ENCODE measurements at regions of chr2 and their contacts with region 1.

Region 1: DNA sequence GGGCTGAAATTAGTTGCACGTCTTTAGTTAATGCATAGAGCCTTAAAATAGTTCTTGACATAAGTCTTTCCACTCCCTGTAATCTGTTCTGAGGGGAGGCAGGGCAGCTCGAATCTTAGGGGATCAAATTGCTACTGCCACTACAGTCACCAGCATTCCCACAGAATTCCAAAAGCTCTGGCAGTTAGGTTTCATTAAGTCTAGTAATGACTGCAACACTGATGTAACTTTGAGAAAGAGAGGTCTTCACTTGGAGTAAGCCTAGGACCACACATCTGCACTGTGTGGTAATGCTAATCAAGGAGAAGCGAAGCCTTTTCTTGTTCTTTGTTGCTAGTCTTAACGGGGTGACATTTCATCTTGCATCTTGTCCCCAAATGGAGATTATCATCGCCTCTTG is 19.3 kb upstream of the NCK2 start:
- DNase-seq: no peak
- ATAC-seq: no peak
- H3K4me3 ChIP-seq: no peak overlapping the region
- H3K4me3 Mint-ChIP-seq: no peak overlapping the region
- H3K27ac ChIP-seq: no peak overlapping the region
- H3K27ac Mint-ChIP-seq: no peak overlapping the region
- H3K4me1 ChIP-seq: no peaks in the 10 kb centered on the region
- H3K4me1 Mint-ChIP-seq: no peaks in the 10 kb centered on the region
- H3K27me3 ChIP-seq: no peaks in the 10 kb centered on the region
- H3K27me3 Mint-ChIP-seq: no peaks in the 10 kb centered on the region
- CTCF ChIP-seq: no peak

Region 2: GRCh38 chr2:105571445-105571987 is 153.9 kb before region 1 on chr2:
- CTCF ChIA-PET with region 1: no interaction called
- POLR2A ChIA-PET with region 1: no interaction called
- intact Hi-C with region 1: loop called in 1 of 2 experiments (anchors 5 kb)
- DNase-seq: peak in 1 of 9 experiments; percentile 25
- ATAC-seq: no peak
- H3K4me3 ChIP-seq: no peak overlapping the region
- H3K4me3 Mint-ChIP-seq: no peak overlapping the region
- H3K27ac ChIP-seq: no peak overlapping the region
- H3K27ac Mint-ChIP-seq: no peak overlapping the region
- H3K4me1 ChIP-seq: peaks cover 8% of the 10 kb centered on the region
- H3K4me1 Mint-ChIP-seq: peaks cover 46% of the 10 kb centered on the region
- H3K27me3 ChIP-seq: no peaks in the 10 kb centered on the region
- H3K27me3 Mint-ChIP-seq: no peaks in the 10 kb centered on the region
- CTCF ChIP-seq: no peak

Region 3: GRCh38 chr2:105592288-105592687 is 133.1 kb before region 1 on chr2:
- CTCF ChIA-PET with region 1: no interaction called
- POLR2A ChIA-PET with region 1: no interaction called
- intact Hi-C with region 1: loop called in 1 of 2 experiments (anchors 5 kb)
- DNase-seq: no peak
- ATAC-seq: no peak
- H3K4me3 ChIP-seq: no peak overlapping the region
- H3K4me3 Mint-ChIP-seq: no peak overlapping the region
- H3K27ac ChIP-seq: no peak overlapping the region
- H3K27ac Mint-ChIP-seq: no peak overlapping the region
- H3K4me1 ChIP-seq: peaks cover 11% of the 10 kb centered on the region
- H3K4me1 Mint-ChIP-seq: peaks cover 9% of the 10 kb centered on the region
- H3K27me3 ChIP-seq: no peaks in the 10 kb centered on the region
- H3K27me3 Mint-ChIP-seq: no peaks in the 10 kb centered on the region
- CTCF ChIP-seq: no peak

Measured in CD8-positive, alpha-beta T cell (primary cell).